ENCODE measurements at regions of chr14 and their contacts with region 1.

Region 1: DNA sequence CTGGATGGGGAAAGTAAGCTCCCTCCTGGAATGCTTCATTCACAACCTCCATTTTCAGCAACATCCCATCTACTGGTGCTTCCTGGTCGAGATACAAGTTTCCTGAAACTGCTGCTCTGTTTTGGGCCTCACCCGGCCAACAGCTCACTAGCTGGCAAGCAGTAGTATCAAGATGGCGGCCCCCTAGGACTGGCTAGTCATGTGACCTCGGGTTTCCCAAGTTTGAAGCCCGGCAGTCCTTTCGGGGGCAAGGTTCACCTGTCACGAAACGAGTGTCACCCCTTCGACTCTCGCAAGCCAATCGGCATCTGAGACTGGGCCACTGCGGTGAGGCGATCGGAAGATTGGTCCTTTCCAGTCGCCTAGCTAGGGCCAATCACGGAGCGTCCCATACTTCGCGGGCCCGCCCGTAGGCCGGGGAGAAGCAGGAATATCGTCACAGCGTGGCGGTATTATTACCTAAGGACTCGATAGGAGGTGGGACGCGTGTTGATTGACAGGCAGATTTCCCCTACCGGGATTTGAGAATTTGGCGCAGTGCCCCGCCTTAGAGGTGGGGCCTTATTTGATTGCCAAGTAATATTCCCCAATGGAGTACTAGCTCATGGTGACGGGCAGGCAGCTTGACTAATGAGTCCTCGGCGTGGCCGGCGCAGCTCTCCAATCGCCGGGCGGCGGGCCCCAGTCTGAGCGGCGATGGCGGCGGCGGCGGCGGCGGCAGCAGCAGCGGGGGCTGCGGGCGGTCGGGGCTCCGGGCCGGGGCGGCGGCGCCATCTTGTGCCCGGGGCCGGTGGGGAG is at the start of gene PABPN1:
- DNase-seq: peak; percentile 99
- ATAC-seq: peak; percentile 94
- H3K4me3 Mint-ChIP-seq: peak within 1 kb of the TSS; percentile 92
- H3K27ac Mint-ChIP-seq: peak within 1 kb of the TSS; percentile 97
- H3K4me1 Mint-ChIP-seq: peaks cover 33% of the 10 kb centered on the region
- H3K27me3 Mint-ChIP-seq: no peaks in the 10 kb centered on the region
- total RNA-seq, gene PABPN1: 200 to 210 TPM

Region 2: GRCh38 chr14:23095196-23096108 is 225.5 kb before region 1 on chr14 and contains the start of gene C14orf119:
- CTCF ChIA-PET with region 1: interaction called, 3 read pairs
- POLR2A ChIA-PET with region 1: interaction called, 16 read pairs
- DNase-seq: peak; percentile 100
- ATAC-seq: peak; percentile 94
- H3K4me3 Mint-ChIP-seq: no peak within 1 kb of the TSS
- H3K27ac Mint-ChIP-seq: no peak within 1 kb of the TSS
- H3K4me1 Mint-ChIP-seq: peaks cover 33% of the 10 kb centered on the region
- H3K27me3 Mint-ChIP-seq: no peaks in the 10 kb centered on the region
- total RNA-seq, gene C14orf119: 46.0 to 47.0 TPM

Region 3: DNA sequence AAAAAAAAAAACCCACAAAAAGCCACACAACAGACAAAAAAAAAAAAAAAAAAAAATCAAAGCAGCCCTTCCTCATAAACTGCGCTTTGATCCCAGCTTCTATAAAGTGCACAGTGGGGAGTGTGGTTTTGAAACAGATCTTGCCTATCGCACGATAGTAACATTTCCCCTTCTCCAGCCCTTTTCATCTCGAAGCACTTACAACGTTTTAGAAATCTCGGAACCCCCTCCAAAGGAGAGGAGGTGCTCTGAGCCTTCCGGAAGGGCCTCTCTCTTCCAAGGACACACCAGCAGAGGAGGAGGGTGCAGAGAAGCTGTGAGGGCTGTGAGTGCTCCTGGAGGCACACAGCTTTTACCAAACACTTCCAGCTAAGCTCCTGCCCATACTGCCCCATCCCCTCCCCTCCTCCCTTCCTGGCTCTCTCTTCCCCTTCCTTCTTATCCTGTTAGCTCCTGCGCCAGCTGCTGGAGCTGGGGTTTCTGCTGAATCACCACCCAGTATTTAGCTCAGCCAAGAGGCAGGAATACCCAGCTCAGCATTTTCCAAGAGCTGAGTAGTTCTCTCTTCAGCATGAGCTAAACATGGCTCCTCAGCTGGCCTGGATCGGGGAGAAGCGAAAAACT is 165.9 kb before region 1 on chr14:
- CTCF ChIA-PET with region 1: no interaction called
- POLR2A ChIA-PET with region 1: no interaction called
- DNase-seq: no peak
- ATAC-seq: no peak
- H3K4me3 Mint-ChIP-seq: no peak overlapping the region
- H3K27ac Mint-ChIP-seq: no peak overlapping the region
- H3K4me1 Mint-ChIP-seq: peaks cover 7% of the 10 kb centered on the region
- H3K27me3 Mint-ChIP-seq: peaks cover 3% of the 10 kb centered on the region

Region 4: DNA sequence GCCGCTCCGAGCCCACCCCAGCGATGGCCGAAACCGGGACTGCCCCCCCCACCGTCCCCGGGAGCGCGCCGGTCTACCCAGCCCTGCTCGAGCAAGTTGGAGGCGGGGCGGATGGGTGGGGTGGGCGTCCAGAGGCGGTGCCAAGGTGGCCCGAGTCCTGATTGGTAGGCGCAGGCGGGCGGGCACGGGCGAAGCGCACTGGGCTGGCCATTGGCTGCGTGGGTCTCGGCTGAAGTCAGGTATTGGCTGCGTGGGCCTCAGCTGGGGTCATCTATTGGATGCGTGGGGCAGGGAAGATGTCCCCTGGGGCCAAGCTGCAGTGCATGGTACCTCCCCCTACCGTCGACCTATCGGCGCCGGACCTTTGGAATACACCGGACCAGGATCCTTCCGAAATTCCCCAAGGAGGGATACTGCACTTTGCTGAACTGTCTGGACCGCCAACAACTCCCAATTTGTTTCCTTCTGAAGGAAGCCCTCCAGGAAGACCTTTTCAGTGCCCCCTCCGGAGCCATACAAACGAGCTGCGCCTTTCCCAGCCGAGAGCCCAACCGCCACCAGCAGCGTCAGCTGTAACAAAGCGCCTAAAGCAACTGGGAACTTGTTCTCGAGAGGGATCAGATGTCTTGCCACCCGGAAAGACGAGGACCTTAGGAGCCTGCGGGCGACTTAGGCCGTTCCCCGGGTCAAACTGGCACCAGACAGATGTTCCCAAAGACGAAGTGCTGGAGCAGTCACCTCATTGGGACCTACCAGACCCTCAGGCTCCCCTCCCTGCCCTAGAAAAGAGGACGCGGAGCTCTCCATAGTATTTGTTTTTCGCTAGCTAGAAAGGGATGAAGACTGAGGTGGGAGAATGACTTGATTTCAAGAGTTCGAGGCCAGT is 34.7 kb before region 1 on chr14 and contains the start of gene HOMEZ:
- CTCF ChIA-PET with region 1: interaction called, 24 read pairs
- POLR2A ChIA-PET with region 1: interaction called, 16 read pairs
- DNase-seq: peak; percentile 99
- ATAC-seq: peak; percentile 100
- H3K4me3 Mint-ChIP-seq: peak within 1 kb of the TSS; percentile 96
- H3K27ac Mint-ChIP-seq: peak within 1 kb of the TSS; percentile 91
- H3K4me1 Mint-ChIP-seq: peaks cover 18% of the 10 kb centered on the region
- H3K27me3 Mint-ChIP-seq: no peaks in the 10 kb centered on the region
- total RNA-seq, gene HOMEZ: 7.8 to 9.2 TPM

Region 5: GRCh38 chr14:23294734-23295561 is 26.0 kb before region 1 on chr14:
- CTCF ChIA-PET with region 1: interaction called, 75 read pairs
- POLR2A ChIA-PET with region 1: interaction called, 8 read pairs
- DNase-seq: peak; percentile 65
- ATAC-seq: peak; percentile 84
- H3K4me3 Mint-ChIP-seq: no peak overlapping the region
- H3K27ac Mint-ChIP-seq: peak overlapping the region; percentile 21
- H3K4me1 Mint-ChIP-seq: peaks cover 22% of the 10 kb centered on the region
- H3K27me3 Mint-ChIP-seq: no peaks in the 10 kb centered on the region

Region 6: DNA sequence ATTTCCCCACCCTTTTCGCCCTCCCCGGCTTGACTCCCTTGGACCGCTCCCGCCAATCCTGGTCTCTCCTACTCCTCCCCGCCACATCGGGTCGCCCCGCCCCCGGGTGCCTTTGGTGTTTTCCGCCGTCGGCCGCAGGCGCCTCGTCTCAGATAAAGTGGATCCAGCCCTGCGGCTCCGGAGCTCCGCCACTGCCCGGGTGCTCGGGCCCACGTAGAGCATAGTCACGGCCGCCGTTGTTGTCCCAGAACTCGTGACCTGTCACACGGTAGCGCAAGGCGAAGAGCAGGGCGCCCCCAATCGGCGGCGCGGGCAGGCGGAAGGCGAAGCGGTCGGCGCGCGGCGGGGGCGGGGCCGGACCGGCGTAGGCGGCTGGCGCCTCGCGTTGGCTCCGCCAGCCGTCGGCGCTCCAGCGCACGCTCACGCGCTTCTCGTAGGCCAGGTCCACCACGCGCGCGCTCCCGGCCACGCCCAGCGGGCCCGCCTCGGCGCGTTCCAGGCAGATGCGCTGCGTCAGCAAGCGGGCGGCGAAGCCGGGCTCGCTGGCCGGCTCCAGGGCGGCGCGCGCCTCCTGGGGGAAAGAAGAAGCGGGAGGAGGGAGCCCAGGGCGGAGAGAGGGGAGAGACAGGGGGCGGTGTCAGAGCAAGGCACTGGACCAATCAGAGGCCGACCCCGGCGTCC is 19.5 kb before region 1 on chr14:
- CTCF ChIA-PET with region 1: interaction called, 75 read pairs
- POLR2A ChIA-PET with region 1: interaction called, 115 read pairs
- DNase-seq: peak; percentile 97
- ATAC-seq: peak; percentile 86
- H3K4me3 Mint-ChIP-seq: peak overlapping the region; percentile 91
- H3K27ac Mint-ChIP-seq: peak overlapping the region; percentile 99
- H3K4me1 Mint-ChIP-seq: peaks cover 31% of the 10 kb centered on the region
- H3K27me3 Mint-ChIP-seq: peaks cover 11% of the 10 kb centered on the region

Region 7: GRCh38 chr14:23307687-23308644 is 13.0 kb before region 1 on chr14:
- CTCF ChIA-PET with region 1: interaction called, 75 read pairs
- POLR2A ChIA-PET with region 1: interaction called, 115 read pairs
- DNase-seq: no peak
- ATAC-seq: no peak
- H3K4me3 Mint-ChIP-seq: no peak overlapping the region
- H3K27ac Mint-ChIP-seq: peak overlapping the region; percentile 43
- H3K4me1 Mint-ChIP-seq: peaks cover 24% of the 10 kb centered on the region
- H3K27me3 Mint-ChIP-seq: peaks cover 27% of the 10 kb centered on the region

Region 8: GRCh38 chr14:23352511-23353432 is 31.8 kb after region 1 on chr14 and contains the start of gene SLC22A17:
- CTCF ChIA-PET with region 1: no interaction called
- POLR2A ChIA-PET with region 1: no interaction called
- DNase-seq: peak; percentile 56
- ATAC-seq: peak; percentile 84
- H3K4me3 Mint-ChIP-seq: peak within 1 kb of the TSS; percentile 29
- H3K27ac Mint-ChIP-seq: no peak within 1 kb of the TSS
- H3K4me1 Mint-ChIP-seq: peaks cover 9% of the 10 kb centered on the region
- H3K27me3 Mint-ChIP-seq: peaks cover 46% of the 10 kb centered on the region
- total RNA-seq, gene SLC22A17: 0.94 to 1.1 TPM

Region 9: DNA sequence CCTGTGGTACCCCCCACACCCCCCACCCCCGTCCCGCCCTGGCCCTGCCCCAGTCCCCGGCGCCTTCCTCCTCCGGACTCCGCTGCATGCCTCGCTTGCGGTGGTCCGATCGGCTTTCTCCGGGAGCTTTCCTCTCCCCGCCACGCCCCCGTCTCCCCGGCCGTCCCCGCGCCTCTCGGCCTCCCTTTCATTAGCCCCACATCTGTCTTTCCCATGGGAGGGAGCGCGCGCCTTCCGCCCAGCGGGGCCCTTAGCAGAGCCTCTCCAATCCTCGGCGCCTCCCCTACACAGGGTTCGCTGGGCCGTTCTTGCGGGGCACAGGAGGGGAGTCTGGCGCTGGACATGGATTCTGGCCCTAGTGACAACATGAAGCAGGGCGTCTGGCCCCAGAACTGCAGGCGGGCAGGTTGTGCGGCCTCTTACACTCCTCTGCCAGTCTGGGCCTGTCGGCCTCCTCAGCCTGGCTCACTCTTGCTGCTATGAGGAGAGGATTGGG is 45.5 kb after region 1 on chr14:
- CTCF ChIA-PET with region 1: no interaction called
- POLR2A ChIA-PET with region 1: no interaction called
- DNase-seq: no peak
- ATAC-seq: no peak
- H3K4me3 Mint-ChIP-seq: no peak overlapping the region
- H3K27ac Mint-ChIP-seq: no peak overlapping the region
- H3K4me1 Mint-ChIP-seq: peaks cover 8% of the 10 kb centered on the region
- H3K27me3 Mint-ChIP-seq: peaks cover 41% of the 10 kb centered on the region

Region 10: GRCh38 chr14:23379366-23380196 is 58.6 kb after region 1 on chr14:
- CTCF ChIA-PET with region 1: interaction called, 87 read pairs
- POLR2A ChIA-PET with region 1: interaction called, 7 read pairs
- DNase-seq: peak; percentile 72
- ATAC-seq: peak; percentile 93
- H3K4me3 Mint-ChIP-seq: no peak overlapping the region
- H3K27ac Mint-ChIP-seq: no peak overlapping the region
- H3K4me1 Mint-ChIP-seq: peaks cover 2% of the 10 kb centered on the region
- H3K27me3 Mint-ChIP-seq: peaks cover 6% of the 10 kb centered on the region

Measured in activated CD8-positive, alpha-beta T cell treated with anti-CD3 and anti-CD28 coated beads, Interleukin-2, amount 10 ng/mL, durations not matched to agents 7 days and 5 days (primary cell).